ENCODE measurements at regions of chr6 and their contacts with region 1.

Region 1: GRCh38 chr6:89035252-89036106 is 45.1 kb upstream of the PNRC1 start:
- DNase-seq: peak; percentile 97 to 98
- ATAC-seq: peak; percentile 81 to 87
- H3K4me3 ChIP-seq: peak overlapping the region in 3 of 4 donors; percentile 14 to 43 (median 24)
- H3K27ac ChIP-seq: peak overlapping the region; percentile 90 to 94 (median 92)
- H3K4me1 ChIP-seq: peaks cover 38 to 46% of the 10 kb centered on the region in 2 donors
- H3K27me3 ChIP-seq: no peaks in the 10 kb centered on the region
- CTCF ChIP-seq: no peak
- POLR2A ChIP-seq: peak; percentile 75 to 82

Region 2: GRCh38 chr6:87701676-87702588 is 1333.5 kb before region 1 on chr6 and contains the start of gene AKIRIN2:
- in situ Hi-C with region 1: no loop called
- intact Hi-C with region 1: loop called (anchors 10 kb)
- DNase-seq: peak; percentile 97
- ATAC-seq: peak; percentile 80 to 81
- H3K4me3 ChIP-seq: peak within 1 kb of the TSS; percentile 86 to 94 (median 94)
- H3K27ac ChIP-seq: peak within 1 kb of the TSS; percentile 94 to 99 (median 97)
- H3K4me1 ChIP-seq: peaks cover 24 to 32% of the 10 kb centered on the region in 2 donors
- H3K27me3 ChIP-seq: no peaks in the 10 kb centered on the region
- CTCF ChIP-seq: no peak
- POLR2A ChIP-seq: peak; percentile 99 to 100
- total RNA-seq, gene AKIRIN2: 25.6 to 44.5 (median 33.1) TPM

Region 3: DNA sequence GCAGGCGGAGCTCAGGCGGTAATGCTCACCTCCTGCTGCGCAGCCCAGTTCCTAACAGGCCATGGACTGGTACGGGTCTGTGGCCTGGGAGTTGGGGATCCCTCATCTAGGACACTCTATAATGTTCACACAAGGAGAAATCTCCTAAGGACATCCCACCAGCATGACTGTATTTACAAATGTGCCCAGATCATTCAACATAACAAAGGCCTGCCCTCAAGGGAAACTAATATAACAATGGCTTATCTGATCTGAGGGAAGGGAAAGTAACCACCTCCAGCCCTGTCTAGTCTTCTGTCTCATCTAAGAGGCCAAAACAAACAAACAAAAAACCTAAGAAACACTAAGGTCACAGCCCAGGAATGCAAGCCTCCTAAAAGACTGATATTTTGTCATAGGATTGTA is 304.9 kb before region 1 on chr6:
- in situ Hi-C with region 1: no loop called
- intact Hi-C with region 1: no loop called
- DNase-seq: no peak
- ATAC-seq: no peak
- H3K4me3 ChIP-seq: no peak overlapping the region
- H3K27ac ChIP-seq: no peak overlapping the region
- H3K4me1 ChIP-seq: peaks cover 0 to 1% of the 10 kb centered on the region in 2 donors
- H3K27me3 ChIP-seq: no peaks in the 10 kb centered on the region
- CTCF ChIP-seq: no peak
- POLR2A ChIP-seq: no peak

Region 4: GRCh38 chr6:88963139-88964090 is 72.1 kb before region 1 on chr6 and contains the start of gene RNGTT:
- in situ Hi-C with region 1: no loop called
- intact Hi-C with region 1: loop called (anchors 5 kb)
- DNase-seq: peak; percentile 97 to 98
- ATAC-seq: peak; percentile 99 to 100
- H3K4me3 ChIP-seq: peak within 1 kb of the TSS; percentile 86 to 97 (median 92)
- H3K27ac ChIP-seq: peak within 1 kb of the TSS; percentile 86 to 90 (median 90)
- H3K4me1 ChIP-seq: peaks cover 15 to 17% of the 10 kb centered on the region in 2 donors
- H3K27me3 ChIP-seq: no peaks in the 10 kb centered on the region
- CTCF ChIP-seq: no peak
- POLR2A ChIP-seq: peak; percentile 23 to 46
- total RNA-seq, gene RNGTT: 4.9 to 11.3 (median 8.2) TPM

Region 5: DNA sequence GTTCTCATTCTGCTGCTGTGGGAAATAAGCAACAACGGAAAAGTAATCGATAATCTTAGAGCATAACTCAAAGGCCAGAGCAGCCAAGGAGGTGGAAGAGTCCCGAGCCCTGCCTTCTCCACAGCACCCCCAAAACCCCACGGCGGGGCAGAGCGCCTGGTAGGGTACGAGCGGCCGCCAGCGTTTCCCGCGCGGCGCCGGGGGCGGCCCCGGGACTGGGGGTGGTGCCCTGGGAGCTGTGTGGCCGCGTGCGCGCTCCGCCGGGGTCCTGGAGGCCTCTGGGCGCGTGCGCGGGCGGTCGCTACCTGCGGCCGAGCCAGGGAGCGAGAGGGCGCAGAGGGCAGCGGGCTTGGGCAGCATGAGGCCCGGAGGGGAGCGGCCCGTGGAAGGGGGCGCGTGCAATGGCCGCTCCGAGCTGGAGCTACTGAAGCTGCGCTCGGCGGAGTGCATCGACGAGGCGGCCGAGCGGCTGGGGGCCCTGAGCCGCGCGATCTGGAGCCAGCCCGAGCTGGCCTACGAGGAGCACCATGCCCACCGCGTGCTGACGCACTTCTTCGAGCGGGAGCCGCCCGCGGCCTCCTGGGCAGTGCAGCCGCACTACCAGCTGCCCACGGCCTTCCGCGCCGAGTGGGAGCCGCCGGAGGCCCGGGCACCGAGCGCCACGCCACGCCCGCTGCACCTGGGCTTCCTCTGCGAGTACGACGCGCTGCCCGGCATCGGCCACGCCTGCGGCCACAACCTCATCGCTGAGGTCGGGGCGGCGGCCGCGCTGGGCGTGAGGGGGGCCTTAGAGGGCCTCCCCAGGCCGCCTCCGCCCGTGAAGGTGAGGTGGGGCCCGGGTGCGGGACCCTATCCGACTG is 110.5 kb after region 1 on chr6 and contains the start of gene PM20D2:
- in situ Hi-C with region 1: no loop called
- intact Hi-C with region 1: loop called (anchors 1 kb)
- DNase-seq: peak; percentile 54 to 75
- ATAC-seq: peak; percentile 67 to 71
- H3K4me3 ChIP-seq: peak within 1 kb of the TSS; percentile 74 to 90 (median 82)
- H3K27ac ChIP-seq: peak within 1 kb of the TSS; percentile 94 to 99 (median 98)
- H3K4me1 ChIP-seq: peaks cover 23 to 25% of the 10 kb centered on the region in 2 donors
- H3K27me3 ChIP-seq: no peaks in the 10 kb centered on the region
- CTCF ChIP-seq: no peak
- POLR2A ChIP-seq: peak; percentile 85 to 88
- total RNA-seq, gene PM20D2: 18.1 to 54.6 (median 26.3) TPM

Region 6: GRCh38 chr6:89186762-89187161 is 151.3 kb after region 1 on chr6:
- in situ Hi-C with region 1: no loop called
- intact Hi-C with region 1: loop called (anchors 2 kb)
- DNase-seq: peak; percentile 84 to 98
- ATAC-seq: peak; percentile 98
- H3K4me3 ChIP-seq: no peak overlapping the region
- H3K27ac ChIP-seq: peak overlapping the region; percentile 76 to 95 (median 84)
- H3K4me1 ChIP-seq: peaks cover 8 to 18% of the 10 kb centered on the region in 2 donors
- H3K27me3 ChIP-seq: no peaks in the 10 kb centered on the region
- CTCF ChIP-seq: no peak
- POLR2A ChIP-seq: peak; percentile 82 to 92

Region 7: DNA sequence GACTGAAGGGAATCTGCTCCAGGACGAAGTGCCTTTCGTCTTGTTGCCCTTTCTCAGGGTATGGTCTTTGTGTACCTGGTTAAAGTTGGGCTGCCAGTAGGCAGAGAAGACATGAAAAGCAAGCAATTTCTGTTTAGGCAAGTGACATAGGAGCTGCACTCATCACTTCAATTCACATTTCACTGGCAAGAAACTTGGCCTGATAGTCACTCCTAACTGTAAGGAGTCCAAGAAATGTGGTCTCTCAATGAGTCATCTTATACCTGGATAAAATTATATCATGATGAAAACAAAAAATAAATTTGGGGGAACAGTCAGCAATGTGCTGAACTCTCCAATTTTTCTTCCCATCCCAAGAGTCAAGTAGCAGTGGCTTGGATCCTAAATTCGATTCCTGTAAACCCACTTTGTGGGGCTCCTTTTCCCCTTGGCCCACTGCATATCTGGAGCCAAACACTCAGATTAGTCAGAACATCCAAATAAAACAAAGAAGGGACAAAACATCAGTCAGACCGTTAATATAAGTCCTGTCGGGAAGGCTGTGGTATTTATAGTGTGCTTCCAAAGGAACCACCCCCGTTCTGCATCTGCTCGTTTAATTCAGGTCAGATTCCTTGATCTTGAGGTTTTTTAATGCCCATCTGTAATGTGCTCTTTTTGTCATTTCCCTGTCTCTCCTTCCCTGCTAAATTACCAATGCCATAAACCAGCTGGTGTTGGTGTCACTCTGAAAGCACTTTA is 186.7 kb after region 1 on chr6:
- in situ Hi-C with region 1: no loop called
- intact Hi-C with region 1: no loop called
- DNase-seq: no peak
- ATAC-seq: peak; percentile 39 to 66
- H3K4me3 ChIP-seq: no peak overlapping the region
- H3K27ac ChIP-seq: no peak overlapping the region
- H3K4me1 ChIP-seq: peaks cover 13 to 16% of the 10 kb centered on the region in 2 donors
- H3K27me3 ChIP-seq: no peaks in the 10 kb centered on the region
- CTCF ChIP-seq: no peak
- POLR2A ChIP-seq: no peak

Region 8: GRCh38 chr6:89352278-89353117 is 317.0 kb after region 1 on chr6 and contains the start of gene UBE2J1:
- in situ Hi-C with region 1: no loop called
- intact Hi-C with region 1: loop called (anchors 5 kb)
- DNase-seq: peak; percentile 90 to 95
- ATAC-seq: peak; percentile 86 to 89
- H3K4me3 ChIP-seq: peak within 1 kb of the TSS; percentile 70 to 95 (median 79)
- H3K27ac ChIP-seq: peak within 1 kb of the TSS; percentile 92 to 100 (median 96)
- H3K4me1 ChIP-seq: peaks cover 37 to 45% of the 10 kb centered on the region in 2 donors
- H3K27me3 ChIP-seq: no peaks in the 10 kb centered on the region
- CTCF ChIP-seq: no peak
- POLR2A ChIP-seq: peak; percentile 92 to 96
- total RNA-seq, gene UBE2J1: 10.5 to 15.1 (median 14.6) TPM

Region 9: GRCh38 chr6:89412071-89413005 is 376.9 kb after region 1 on chr6 and contains the start of gene RRAGD:
- in situ Hi-C with region 1: no loop called
- intact Hi-C with region 1: loop called (anchors 5 kb)
- DNase-seq: peak; percentile 82 to 91
- ATAC-seq: peak; percentile 85 to 91
- H3K4me3 ChIP-seq: peak within 1 kb of the TSS; percentile 89 to 97 (median 93)
- H3K27ac ChIP-seq: peak within 1 kb of the TSS; percentile 98 to 99 (median 99)
- H3K4me1 ChIP-seq: peaks cover 36 to 37% of the 10 kb centered on the region in 2 donors
- H3K27me3 ChIP-seq: no peaks in the 10 kb centered on the region
- CTCF ChIP-seq: peak in 3 of 5 experiments; percentile 20 to 47 (median 22)
- POLR2A ChIP-seq: peak; percentile 93 to 95
- total RNA-seq, gene RRAGD: 53.6 to 173 (median 106) TPM